ENCODE measurements at regions of chr17 and their contacts with region 1.

Region 1: DNA sequence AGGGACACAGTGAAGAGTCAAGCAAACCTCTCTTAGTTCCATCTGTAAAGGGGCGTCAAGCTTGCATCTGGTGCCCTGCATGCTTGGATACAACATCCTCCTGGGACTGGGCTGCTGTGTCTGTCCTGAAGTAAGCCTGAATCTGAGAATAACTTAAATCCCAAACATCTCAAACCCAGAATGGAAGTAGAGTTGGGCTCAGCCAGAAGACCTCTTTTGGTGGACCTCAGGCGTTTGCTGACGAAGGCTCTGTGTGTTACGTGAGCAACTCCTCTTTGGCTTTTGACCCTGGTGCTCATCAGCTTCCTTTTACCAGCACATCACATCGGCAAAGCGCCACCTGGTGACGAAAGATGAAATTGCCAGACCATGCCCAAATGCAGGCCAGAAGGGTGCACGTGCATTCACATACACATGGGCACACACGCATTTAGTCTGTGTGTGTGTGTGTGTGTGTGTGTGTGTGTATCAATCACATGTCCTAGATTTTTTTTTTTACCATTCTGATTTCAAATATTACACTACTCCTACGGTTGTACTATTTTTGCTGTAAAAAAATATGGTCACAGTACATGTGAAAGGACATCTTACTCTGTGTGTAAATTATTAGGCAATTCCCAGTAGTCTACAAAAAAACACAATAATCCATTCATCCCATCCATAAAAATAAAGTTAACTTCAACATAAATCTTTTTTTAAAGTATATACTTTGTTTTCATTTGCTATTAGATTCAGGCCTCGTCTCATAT is 41.1 kb upstream of the FOXJ1 start:
- DNase-seq: peak; percentile 93
- H3K4me3 ChIP-seq: no peak overlapping the region
- H3K27ac ChIP-seq: no peak overlapping the region
- H3K4me1 ChIP-seq: peaks cover 0 to 7% (median 3%) of the 10 kb centered on the region in 4 donors
- H3K27me3 ChIP-seq: no peaks in the 10 kb centered on the region
- CTCF ChIP-seq: peak; percentile 78 to 92 (median 88)
- EP300 ChIP-seq: no peak
- POLR2A ChIP-seq: no peak

Region 2: GRCh38 chr17:76271669-76272540 is 89.7 kb after region 1 on chr17:
- in situ Hi-C with region 1: loop called in 1 of 4 experiments (anchors 25 kb)
- intact Hi-C with region 1: loop called (anchors 5 kb)
- DNase-seq: peak; percentile 71
- H3K4me3 ChIP-seq: peak overlapping the region in 3 of 4 donors; percentile 26 to 33 (median 31)
- H3K27ac ChIP-seq: peak overlapping the region; percentile 73 to 98 (median 78)
- H3K4me1 ChIP-seq: peaks cover 39 to 63% (median 60%) of the 10 kb centered on the region in 4 donors
- H3K27me3 ChIP-seq: no peaks in the 10 kb centered on the region
- CTCF ChIP-seq: peak in 1 of 5 experiments; percentile 16
- EP300 ChIP-seq: no peak
- POLR2A ChIP-seq: peak; percentile 59

Region 3: DNA sequence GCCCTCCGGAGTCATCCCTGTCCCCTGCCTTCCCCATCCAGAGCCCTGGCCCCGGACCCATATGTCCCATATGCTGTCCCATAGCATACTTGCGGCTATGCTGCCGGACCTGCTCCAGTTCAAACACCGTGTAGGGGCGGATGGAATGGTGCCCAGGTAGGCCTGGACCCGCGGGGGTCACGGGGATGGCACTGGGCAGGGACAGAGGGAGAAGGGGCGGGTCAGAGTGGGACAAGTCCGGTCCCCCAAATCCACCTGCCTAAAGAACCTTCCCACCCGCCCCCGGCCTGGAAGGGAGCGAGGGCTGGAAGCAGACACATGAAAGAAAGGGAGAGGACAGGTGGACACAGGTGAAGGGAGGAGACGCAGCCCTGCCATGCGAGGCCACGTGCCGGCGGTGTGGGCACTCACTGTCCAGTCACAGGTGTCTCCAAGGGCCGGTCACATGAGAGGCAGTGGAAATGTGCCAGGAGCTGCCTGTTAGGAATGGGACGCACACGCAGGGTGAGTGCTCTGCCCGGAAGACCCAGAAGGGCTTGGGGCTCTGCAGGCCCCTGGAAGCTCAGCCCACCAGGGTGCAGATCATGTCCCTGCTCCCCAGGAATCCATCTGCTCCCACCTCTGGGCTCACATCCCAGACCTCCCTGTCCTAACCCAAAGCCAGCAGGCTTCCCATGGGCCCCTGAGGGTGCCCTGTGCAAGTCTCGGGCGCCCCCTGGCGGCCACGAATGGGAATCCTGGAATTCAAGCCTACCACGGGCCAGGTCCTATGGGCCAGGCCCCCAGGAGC is 97.0 kb after region 1 on chr17:
- in situ Hi-C with region 1: loop called in 1 of 4 experiments (anchors 25 kb)
- intact Hi-C with region 1: loop called (anchors 5 kb)
- DNase-seq: peak; percentile 91
- H3K4me3 ChIP-seq: no peak overlapping the region
- H3K27ac ChIP-seq: peak overlapping the region in 1 of 4 donors; percentile 1
- H3K4me1 ChIP-seq: peaks cover 0 to 7% (median 2%) of the 10 kb centered on the region in 4 donors
- H3K27me3 ChIP-seq: no peaks in the 10 kb centered on the region
- CTCF ChIP-seq: peak; percentile 95 to 98 (median 98)
- EP300 ChIP-seq: no peak
- POLR2A ChIP-seq: no peak